Activated CD4-positive, alpha-beta T cell treated with anti-CD3 and anti-CD28 coated beads, Interleukin-2, amount 10 ng/mL, durations not matched to agents 24 days and 14 days (primary cell): ENCODE measurements at regions of chr9 and their contacts with region 1.

Region 1: DNA sequence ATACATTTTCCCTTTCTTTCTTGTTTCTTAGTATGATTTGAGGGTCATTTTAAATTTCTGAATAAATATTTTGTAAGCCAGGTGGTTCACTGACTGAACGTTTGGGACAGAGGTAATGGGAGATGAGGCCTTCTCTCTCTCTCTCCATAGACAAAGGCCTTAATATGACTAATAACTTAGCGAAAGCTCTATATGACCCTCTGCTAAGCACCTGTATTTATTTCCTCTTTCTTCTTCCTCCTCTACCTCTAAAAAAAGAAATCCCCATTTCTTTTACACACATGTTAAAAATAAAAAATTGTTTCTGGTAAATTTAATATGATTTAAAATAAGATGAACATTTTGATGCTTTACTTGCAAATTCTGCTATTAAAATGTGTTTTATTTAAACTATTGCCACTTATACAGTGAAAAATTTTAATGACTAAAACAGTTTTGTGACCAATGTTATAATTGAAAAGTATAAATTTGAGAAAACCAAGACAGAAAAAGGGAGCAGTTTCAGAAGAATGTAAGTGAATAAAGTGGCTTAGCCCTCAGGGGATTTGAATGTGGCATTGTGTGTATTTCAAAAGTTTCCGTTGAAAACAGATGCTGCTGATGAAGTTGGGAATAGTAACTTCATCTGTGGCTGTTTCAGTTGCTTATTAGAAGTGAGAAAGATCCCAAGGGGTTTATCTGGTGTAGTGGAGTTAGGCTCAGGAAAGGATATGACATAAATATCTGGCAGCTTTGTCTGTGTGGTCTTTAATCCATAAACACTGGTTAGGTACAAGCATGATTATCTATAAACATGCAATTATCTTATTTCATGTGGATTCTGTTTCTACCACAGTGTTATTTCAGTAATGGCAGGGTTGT is 128.6 kb upstream of the GRHPR start:
- DNase-seq: no peak
- H3K4me3 Mint-ChIP-seq: no peak overlapping the region
- H3K27ac Mint-ChIP-seq: no peak overlapping the region
- H3K4me1 Mint-ChIP-seq: peaks cover 42% of the 10 kb centered on the region
- H3K27me3 Mint-ChIP-seq: no peaks in the 10 kb centered on the region

Region 2: GRCh38 chr9:36258208-36258988 is 1035.5 kb before region 1 on chr9 and contains the start of gene GNE:
- intact Hi-C with region 1: loop called (anchors 5 kb)
- DNase-seq: peak; percentile 100
- H3K4me3 Mint-ChIP-seq: peak within 1 kb of the TSS; percentile 93
- H3K27ac Mint-ChIP-seq: peak within 1 kb of the TSS; percentile 94
- H3K4me1 Mint-ChIP-seq: peaks cover 10% of the 10 kb centered on the region
- H3K27me3 Mint-ChIP-seq: peaks cover 2% of the 10 kb centered on the region
- total RNA-seq, gene GNE: 22.2 and 23.3 TPM in 2 replicates

Region 3: GRCh38 chr9:37119907-37120842 is 173.7 kb before region 1 on chr9 and contains the start of gene ZCCHC7:
- intact Hi-C with region 1: loop called (anchors 1 kb)
- DNase-seq: peak; percentile 97
- H3K4me3 Mint-ChIP-seq: peak within 1 kb of the TSS; percentile 92
- H3K27ac Mint-ChIP-seq: peak within 1 kb of the TSS; percentile 98
- H3K4me1 Mint-ChIP-seq: peaks cover 17% of the 10 kb centered on the region
- H3K27me3 Mint-ChIP-seq: no peaks in the 10 kb centered on the region
- total RNA-seq, gene ZCCHC7: 24.2 and 25.3 TPM in 2 replicates

Region 4: GRCh38 chr9:37174247-37174646 is 119.6 kb before region 1 on chr9:
- intact Hi-C with region 1: no loop called
- DNase-seq: no peak
- H3K4me3 Mint-ChIP-seq: no peak overlapping the region
- H3K27ac Mint-ChIP-seq: no peak overlapping the region
- H3K4me1 Mint-ChIP-seq: peaks cover 4% of the 10 kb centered on the region
- H3K27me3 Mint-ChIP-seq: no peaks in the 10 kb centered on the region

Region 5: DNA sequence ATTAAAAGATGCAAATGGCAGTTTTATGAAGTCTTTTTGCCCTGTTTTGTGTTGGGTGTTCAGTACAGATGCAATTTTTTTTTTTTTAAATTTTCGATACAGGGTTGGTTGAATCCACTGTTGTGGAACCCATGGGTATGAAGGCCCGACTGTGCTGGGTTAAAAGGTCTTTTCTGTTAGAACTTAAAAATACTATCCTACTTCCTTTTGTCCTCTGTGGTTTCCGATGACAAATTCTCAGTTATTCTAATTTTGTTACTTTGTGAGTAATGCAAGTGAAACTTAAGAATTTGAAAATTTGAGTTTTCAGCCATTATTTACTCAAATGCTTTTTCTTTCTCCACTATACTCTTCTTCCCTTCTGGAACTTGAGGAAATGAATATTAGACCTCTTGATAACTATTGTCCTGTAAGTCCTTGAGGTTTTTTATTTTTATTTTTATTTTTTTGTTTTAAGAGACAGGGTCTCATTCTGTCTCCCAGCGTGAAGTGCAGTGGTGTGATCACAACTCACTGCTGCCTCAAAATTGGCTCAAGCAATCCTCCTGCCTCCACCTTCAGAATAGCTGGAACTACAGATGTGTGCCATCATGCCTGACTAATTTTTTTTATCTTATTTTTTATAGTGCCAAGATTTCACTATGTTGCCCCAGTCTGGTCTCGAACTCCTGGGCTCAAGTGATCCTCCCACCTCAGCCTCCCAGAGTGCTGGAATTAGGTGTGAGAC is 106.0 kb before region 1 on chr9:
- intact Hi-C with region 1: loop called (anchors 5 kb)
- DNase-seq: no peak
- H3K4me3 Mint-ChIP-seq: peak overlapping the region; percentile 82
- H3K27ac Mint-ChIP-seq: peak overlapping the region; percentile 90
- H3K4me1 Mint-ChIP-seq: peaks cover 22% of the 10 kb centered on the region
- H3K27me3 Mint-ChIP-seq: no peaks in the 10 kb centered on the region

Region 6: DNA sequence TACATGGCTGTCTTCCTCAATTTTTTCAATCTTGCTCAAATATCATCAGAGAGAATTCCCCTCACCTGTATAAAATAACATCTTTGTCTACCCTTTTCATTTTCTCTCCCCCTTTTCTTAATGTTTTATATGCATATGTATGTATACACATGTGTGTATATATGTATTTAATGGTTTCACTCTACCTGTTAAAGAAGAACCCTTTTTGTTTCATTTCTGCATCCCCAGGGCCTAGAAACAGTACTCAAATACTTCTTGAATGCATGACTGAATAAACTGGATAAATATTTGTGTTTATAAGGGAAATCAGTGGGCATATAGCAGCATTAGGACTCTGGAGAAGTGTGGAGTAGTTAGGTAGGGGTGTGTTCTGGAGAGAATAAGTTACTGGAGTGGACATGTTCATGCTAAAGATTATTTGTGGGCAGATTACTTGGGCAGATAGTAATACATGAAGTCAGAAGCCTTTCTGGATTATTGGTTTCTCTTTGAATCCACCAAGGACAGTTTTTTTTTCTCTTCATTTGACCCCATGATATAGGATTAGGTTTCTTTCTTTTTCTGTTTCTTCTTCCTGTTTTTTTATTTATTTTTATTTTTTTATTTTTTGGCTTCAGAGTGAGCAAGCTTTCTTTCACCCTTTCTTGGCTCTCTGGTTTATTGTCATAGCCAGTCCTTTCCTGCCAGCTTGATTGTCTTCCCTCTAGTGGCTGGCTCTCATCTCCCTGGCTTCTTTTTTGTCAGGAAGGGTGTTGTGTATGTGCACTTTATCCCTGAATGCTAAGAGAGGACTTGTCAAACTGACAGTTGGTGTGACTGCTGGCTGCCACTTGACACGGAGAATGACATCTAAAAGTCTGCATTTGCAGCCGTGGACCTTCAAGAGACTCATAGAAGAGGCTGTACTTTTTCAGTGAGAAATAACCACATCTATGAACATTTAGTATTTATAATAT is 84.2 kb before region 1 on chr9:
- intact Hi-C with region 1: loop called (anchors 2 kb)
- DNase-seq: no peak
- H3K4me3 Mint-ChIP-seq: no peak overlapping the region
- H3K27ac Mint-ChIP-seq: no peak overlapping the region
- H3K4me1 Mint-ChIP-seq: peaks cover 30% of the 10 kb centered on the region
- H3K27me3 Mint-ChIP-seq: no peaks in the 10 kb centered on the region

Region 7: GRCh38 chr9:37271679-37272078 is 22.2 kb before region 1 on chr9:
- intact Hi-C with region 1: no loop called
- DNase-seq: no peak
- H3K4me3 Mint-ChIP-seq: no peak overlapping the region
- H3K27ac Mint-ChIP-seq: no peak overlapping the region
- H3K4me1 Mint-ChIP-seq: peaks cover 2% of the 10 kb centered on the region
- H3K27me3 Mint-ChIP-seq: no peaks in the 10 kb centered on the region

Region 8: DNA sequence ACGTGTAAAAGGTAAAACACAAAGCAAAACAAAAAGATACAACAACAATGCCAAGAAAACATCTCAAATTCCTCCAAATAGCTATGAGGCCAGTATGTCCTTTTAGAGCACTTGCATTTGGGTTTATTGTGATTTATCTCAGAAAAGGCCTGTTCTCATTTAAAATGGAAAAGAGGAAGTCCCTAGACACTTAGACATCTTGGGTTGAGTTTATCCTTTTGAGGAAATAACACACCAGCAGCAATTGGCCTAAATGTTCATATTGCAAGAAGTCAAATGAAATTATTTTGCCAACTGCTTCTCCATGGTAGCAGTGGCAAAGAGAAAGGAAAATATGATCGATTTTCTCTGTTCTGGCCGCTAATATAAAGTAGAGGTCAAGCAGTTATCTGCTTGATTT is 416.2 kb after region 1 on chr9:
- intact Hi-C with region 1: no loop called
- DNase-seq: no peak
- H3K4me3 Mint-ChIP-seq: no peak overlapping the region
- H3K27ac Mint-ChIP-seq: no peak overlapping the region
- H3K4me1 Mint-ChIP-seq: peaks cover 8% of the 10 kb centered on the region
- H3K27me3 Mint-ChIP-seq: peaks cover 20% of the 10 kb centered on the region